Activated B cell treated with CpG ODN at 0.5 μM for 24 hours (primary cell): ENCODE measurements at regions of chr16 and their contacts with region 1.

Region 1: DNA sequence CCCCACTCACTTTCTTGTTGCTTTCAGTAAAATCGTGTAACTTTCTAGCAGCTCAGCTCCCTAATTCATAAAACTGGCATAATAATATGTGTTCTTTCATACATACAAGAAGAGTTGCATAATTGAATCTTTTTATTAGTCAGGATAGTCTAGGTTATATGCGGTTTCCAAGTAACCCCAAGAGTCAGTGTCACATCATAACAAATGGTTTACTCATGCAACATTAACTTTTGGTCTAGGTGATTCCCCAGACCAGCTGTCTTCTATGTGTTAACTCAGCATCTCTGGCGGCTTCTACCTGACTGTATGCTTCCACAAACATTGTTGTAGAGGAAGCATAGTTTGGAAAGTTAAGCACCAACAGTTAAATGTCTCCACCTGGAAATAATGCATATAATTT is 1000.4 kb downstream of the CDH11 start:
- DNase-seq: no peak
- ATAC-seq: no peak
- H3K4me3 Mint-ChIP-seq: no peak overlapping the region
- H3K27ac Mint-ChIP-seq: no peak overlapping the region
- H3K4me1 Mint-ChIP-seq: no peaks in the 10 kb centered on the region
- H3K27me3 Mint-ChIP-seq: no peaks in the 10 kb centered on the region
- CTCF ChIP-seq: no peak

Region 2: DNA sequence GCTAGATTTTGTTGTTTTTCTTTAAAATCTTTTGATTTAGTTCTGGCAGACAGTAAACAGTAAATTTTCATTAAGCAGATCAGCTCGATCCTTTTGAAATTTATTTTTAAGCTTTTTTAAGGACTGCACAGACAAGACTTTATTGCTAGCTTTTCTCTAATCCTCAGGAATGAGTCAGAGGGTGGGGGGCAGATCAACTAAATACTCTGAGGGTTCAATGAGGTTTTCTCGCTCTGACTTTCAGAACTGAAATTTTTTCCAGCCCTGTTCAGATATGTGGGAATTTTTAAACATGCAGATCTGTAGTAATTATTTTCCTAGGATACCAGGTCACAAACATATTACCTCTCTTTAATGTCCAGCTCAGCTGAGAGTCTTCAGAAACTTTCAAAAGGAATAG is 23.1 kb after region 1 on chr16:
- CTCF ChIA-PET with region 1: no interaction called
- POLR2A ChIA-PET with region 1: no interaction called
- intact Hi-C with region 1: loop called (anchors 1 kb)
- DNase-seq: no peak
- ATAC-seq: no peak
- H3K4me3 Mint-ChIP-seq: no peak overlapping the region
- H3K27ac Mint-ChIP-seq: no peak overlapping the region
- H3K4me1 Mint-ChIP-seq: no peaks in the 10 kb centered on the region
- H3K27me3 Mint-ChIP-seq: no peaks in the 10 kb centered on the region
- CTCF ChIP-seq: no peak